Head of caudate nucleus (tissue), 42 donors: ENCODE measurements at regions of chr19 and their contacts with region 1.

Region 1: GRCh38 chr19:17346109-17346671 is 8.8 kb downstream of the GTPBP3 start:
- DNase-seq: peak; percentile 53 to 91 (median 80)

Region 2: DNA sequence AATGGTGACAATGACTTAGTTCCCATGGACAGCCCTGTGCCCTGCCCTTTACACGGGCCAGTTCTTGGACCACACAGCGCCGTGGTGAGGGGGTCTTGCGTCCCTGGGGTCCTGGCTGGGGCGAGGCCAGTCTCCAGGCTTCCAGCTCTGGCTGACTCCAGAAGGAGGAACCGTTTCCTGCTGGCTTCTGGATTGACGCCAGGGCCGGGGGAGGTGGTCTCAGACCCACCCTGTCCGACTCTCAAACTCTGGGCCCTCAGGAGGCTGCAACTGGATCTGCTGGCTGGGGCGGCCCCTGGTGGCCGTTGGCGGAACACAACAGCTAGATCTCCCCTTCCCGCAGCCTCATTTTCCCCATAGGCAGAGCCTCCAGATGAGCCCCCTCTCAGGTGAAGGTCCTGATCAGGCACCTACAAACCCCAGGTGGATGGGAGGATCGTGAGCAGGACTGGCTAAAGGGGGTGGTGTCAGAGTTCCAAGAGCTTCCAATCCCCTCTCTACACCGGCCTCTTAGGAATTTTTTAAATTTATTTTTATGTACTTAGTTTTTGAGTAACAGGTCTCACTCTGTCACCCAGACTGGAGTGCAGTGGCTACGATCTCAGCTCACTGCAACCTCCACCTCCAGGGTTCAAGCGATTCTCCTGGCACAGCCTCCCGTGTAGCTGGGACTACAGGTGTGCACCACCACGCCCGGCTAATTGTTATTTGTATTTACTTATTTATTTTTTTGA is 39.9 kb after region 1 on chr19:
- intact Hi-C with region 1: loop called (anchors 5 kb)
- DNase-seq: peak in 38 of 42 donors; percentile 14 to 73 (median 45)

Region 3: GRCh38 chr19:17519967-17520366 is 173.8 kb after region 1 on chr19:
- intact Hi-C with region 1: no loop called
- DNase-seq: no peak